ENCODE measurements at regions of chr7 and their contacts with region 1.

Region 1: DNA sequence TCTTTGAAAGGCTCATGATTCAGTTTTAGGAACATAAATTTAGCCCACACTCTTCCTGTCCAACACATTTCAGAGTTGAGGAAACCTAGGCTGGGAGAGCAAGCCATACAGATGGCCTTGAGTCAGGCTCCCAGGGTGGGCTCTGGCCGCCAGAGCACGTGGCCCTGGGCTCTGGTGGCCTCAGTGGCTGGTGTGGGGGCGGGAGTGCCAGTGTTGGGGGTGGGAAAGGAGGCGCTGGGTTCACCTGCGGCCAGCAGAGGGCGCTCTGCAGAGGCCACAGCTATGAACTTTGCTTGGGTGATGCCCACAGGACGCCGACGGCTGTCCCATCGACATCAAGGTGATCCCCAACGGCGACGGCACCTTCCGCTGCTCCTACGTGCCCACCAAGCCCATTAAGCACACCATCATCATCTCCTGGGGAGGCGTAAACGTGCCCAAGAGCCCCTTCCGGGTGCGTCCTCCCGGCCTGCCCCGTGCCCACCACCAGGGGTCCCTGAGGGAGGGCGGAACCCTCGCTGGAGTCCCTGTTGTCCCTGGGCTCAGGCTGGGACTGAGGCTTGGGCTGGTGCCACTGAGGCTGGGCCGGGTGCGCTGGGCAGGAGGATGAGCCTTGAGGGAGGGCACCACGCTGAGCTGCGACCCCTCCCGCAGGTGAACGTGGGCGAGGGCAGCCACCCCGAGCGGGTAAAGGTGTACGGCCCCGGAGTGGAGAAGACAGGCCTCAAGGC is 11.9 kb downstream of the FLNC start:
- DNase-seq: peak; percentile 83

Region 2: DNA sequence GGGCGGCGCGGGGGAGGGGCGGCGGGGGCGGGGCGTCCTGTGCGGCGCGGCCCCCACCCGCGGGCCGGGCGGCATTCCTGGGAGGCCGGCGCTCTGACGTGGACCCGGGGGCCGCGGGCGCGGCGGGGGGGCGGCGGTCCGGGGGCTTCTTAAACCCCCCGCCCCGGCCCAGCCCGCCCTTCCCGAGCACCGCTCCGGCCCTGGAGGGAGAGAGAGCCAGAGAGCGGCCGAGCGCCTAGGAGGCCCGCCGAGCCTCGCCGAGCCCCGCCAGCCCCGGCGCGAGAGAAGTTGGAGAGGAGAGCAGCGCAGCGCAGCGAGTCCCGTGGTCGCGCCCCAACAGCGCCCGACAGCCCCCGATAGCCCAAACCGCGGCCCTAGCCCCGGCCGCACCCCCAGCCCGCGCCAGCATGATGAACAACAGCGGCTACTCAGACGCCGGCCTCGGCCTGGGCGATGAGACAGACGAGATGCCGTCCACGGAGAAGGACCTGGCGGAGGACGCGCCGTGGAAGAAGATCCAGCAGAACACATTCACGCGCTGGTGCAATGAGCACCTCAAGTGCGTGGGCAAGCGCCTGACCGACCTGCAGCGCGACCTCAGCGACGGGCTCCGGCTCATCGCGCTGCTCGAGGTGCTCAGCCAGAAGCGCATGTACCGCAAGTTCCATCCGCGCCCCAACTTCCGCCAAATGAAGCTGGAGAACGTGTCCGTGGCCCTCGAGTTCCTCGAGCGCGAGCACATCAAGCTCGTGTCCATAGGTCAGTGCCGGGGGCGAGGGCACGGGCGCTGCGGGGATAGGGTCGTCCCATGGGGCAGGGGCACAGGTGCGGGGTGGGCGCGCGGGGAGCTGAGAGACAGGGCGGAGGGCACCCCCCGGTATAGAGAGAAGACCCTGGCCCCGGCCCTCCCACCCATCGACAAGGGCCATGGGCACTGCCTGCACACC is 11.6 kb before region 1 on chr7 and contains the start of gene FLNC:
- CTCF ChIA-PET with region 1: interaction called, 15 read pairs
- POLR2A ChIA-PET with region 1: interaction called, 3 read pairs
- DNase-seq: peak; percentile 45

Measured in HEK293T (cell line).